Activated B cell treated with CpG ODN at 0.5 μM for 24 hours (primary cell): ENCODE measurements at regions of chr20 and their contacts with region 1.

Region 1: DNA sequence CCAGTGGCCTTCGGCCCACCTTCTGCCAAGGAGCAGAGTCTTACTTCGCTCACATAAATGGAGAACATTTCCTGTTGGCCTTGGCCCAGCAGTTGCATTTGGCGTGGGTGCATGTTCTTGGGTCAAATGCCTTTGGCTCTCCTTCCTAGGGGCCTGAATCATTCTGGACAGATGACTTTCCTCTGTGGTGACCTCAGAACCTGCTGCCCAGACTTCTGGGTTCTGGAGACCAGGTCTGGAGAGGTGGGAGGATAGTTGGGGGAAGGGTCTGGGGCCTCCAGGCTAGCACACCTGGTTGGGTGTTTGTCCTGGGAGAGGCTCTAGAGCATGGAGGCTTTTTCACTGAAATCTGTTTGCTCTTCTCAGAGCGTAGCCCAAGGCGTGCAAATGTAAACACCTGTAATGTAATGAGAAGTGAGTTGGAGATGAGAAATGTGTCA is 29.4 kb downstream of the BCAS4 start:
- DNase-seq: no peak
- ATAC-seq: no peak
- H3K4me3 Mint-ChIP-seq: no peak overlapping the region
- H3K27ac Mint-ChIP-seq: peak overlapping the region; percentile 71
- H3K4me1 Mint-ChIP-seq: peaks cover 55% of the 10 kb centered on the region
- H3K27me3 Mint-ChIP-seq: no peaks in the 10 kb centered on the region
- CTCF ChIP-seq: no peak

Region 2: GRCh38 chr20:50799890-50800655 is 24.1 kb before region 1 on chr20:
- CTCF ChIA-PET with region 1: interaction called, 145 read pairs
- POLR2A ChIA-PET with region 1: interaction called, 233 read pairs
- intact Hi-C with region 1: no loop called
- DNase-seq: no peak
- ATAC-seq: peak; percentile 47
- H3K4me3 Mint-ChIP-seq: peak overlapping the region; percentile 71
- H3K27ac Mint-ChIP-seq: peak overlapping the region; percentile 96
- H3K4me1 Mint-ChIP-seq: peaks cover 71% of the 10 kb centered on the region
- H3K27me3 Mint-ChIP-seq: no peaks in the 10 kb centered on the region
- CTCF ChIP-seq: no peak

Region 3: GRCh38 chr20:52303281-52303950 is 1479.2 kb after region 1 on chr20:
- CTCF ChIA-PET with region 1: no interaction called
- POLR2A ChIA-PET with region 1: no interaction called
- intact Hi-C with region 1: no loop called
- DNase-seq: no peak
- ATAC-seq: no peak
- H3K4me3 Mint-ChIP-seq: no peak overlapping the region
- H3K27ac Mint-ChIP-seq: no peak overlapping the region
- H3K4me1 Mint-ChIP-seq: no peaks in the 10 kb centered on the region
- H3K27me3 Mint-ChIP-seq: peaks cover 16% of the 10 kb centered on the region
- CTCF ChIP-seq: no peak